Caco-2 (cell line): ENCODE measurements at regions of chr11 and their contacts with region 1.

Region 1: DNA sequence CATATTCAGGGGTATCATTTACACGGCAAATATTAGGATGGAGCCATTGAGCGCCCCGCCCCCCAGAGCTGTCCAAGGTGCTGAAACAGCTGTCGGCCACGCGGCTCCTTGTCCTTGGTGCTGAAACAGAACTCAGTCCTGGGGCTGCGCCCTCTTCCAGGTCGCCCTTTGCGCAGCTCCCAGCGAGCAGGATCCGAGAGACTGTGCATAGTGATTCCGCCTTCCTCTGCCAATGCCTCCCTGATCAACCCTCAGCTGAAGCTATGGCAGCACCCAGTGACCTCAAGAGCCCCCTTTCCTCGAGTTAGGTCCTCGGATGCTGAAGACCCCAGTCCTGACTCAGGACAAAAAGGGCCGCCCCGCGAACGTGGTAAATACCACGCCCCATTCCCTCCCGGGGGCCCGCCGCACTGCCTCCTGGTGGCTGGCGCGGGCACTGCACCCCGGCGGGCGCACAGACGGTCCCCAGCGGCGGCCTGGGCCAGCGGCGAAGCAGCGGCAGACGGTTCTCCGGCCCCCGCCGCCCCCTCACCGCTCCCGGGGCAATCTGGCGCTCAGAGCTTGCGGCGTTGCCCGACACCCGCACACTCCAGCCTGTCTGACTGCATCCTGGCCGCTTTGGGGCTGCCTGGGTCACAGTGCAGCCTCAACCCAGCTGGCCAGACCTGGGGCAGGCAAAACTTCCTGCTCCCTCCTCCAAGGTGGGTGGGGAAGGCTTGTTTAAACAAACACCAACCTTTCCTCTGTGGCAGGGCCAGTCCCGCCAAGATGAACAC is 13.4 kb downstream of the SYT7 start:
- DNase-seq: peak; percentile 86 to 90
- H3K4me3 ChIP-seq: no peak overlapping the region
- H3K4me3 Mint-ChIP-seq: no peak overlapping the region
- H3K27ac Mint-ChIP-seq: no peak overlapping the region
- H3K4me1 ChIP-seq: no peaks in the 10 kb centered on the region
- H3K4me1 Mint-ChIP-seq: no peaks in the 10 kb centered on the region
- H3K27me3 ChIP-seq: no peaks in the 10 kb centered on the region
- H3K27me3 Mint-ChIP-seq: no peaks in the 10 kb centered on the region
- CTCF ChIP-seq: peak; percentile 46 to 77

Region 2: DNA sequence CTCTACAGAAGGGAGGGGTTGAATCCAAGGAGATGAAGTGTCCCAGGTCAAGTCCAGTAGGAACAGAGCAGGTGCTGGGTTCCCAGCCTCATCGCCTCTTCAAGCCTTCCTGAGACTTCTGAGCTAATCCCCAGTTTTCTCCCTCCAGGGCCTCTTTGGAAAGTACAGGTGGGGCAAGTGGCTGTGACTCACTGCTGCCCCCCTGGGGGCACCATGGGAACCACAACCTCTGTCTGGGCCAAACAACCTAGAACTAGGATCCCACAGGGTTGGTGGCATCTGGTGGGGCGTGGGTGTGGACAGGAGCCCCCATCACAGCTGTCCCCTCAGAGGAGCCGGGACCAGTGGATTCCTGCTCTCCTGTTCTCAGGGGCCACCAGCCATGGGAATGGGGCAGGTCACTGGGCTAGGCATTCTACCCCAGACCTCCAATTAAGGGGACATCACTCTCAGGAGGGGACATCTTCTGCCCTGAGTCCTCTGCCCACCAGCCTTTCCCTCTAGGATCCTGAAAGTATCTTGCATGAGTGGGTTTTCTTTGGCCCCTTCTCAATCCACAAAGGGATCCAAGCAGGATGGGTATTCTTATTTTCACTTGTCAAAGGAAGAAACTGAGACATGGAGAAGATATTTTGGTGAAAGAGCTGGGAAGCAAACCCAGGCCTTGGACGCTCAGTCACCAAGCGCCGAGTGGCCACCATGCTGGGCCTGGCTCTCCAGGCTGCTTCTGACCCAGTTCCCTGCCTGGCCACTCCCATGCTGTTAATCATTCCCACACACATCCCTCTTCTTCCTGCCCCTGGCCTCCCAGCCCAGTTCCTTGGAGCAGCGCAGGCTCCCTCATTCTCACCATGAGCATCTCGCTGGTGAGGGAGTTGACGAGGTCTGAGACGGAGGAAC is 35.1 kb before region 1 on chr11:
- CTCF ChIA-PET with region 1: no interaction called
- POLR2A ChIA-PET with region 1: no interaction called
- intact Hi-C with region 1: loop called (anchors 2 kb)
- DNase-seq: peak; percentile 67 to 73
- H3K4me3 ChIP-seq: no peak overlapping the region
- H3K4me3 Mint-ChIP-seq: no peak overlapping the region
- H3K27ac Mint-ChIP-seq: no peak overlapping the region
- H3K4me1 ChIP-seq: peaks cover 41% of the 10 kb centered on the region
- H3K4me1 Mint-ChIP-seq: peaks cover 25% of the 10 kb centered on the region
- H3K27me3 ChIP-seq: no peaks in the 10 kb centered on the region
- H3K27me3 Mint-ChIP-seq: no peaks in the 10 kb centered on the region
- CTCF ChIP-seq: peak; percentile 85 to 86

Region 3: GRCh38 chr11:61609980-61610366 is 42.5 kb after region 1 on chr11:
- CTCF ChIA-PET with region 1: interaction called, 3 read pairs
- POLR2A ChIA-PET with region 1: no interaction called
- intact Hi-C with region 1: loop called (anchors 1 kb)
- DNase-seq: peak; percentile 68 to 71
- H3K4me3 ChIP-seq: no peak overlapping the region
- H3K4me3 Mint-ChIP-seq: peak overlapping the region; percentile 61
- H3K27ac Mint-ChIP-seq: peak overlapping the region; percentile 71
- H3K4me1 ChIP-seq: peaks cover 37% of the 10 kb centered on the region
- H3K4me1 Mint-ChIP-seq: peaks cover 22% of the 10 kb centered on the region
- H3K27me3 ChIP-seq: no peaks in the 10 kb centered on the region
- H3K27me3 Mint-ChIP-seq: no peaks in the 10 kb centered on the region
- CTCF ChIP-seq: peak in 1 of 2 experiments; percentile 25